ENCODE measurements at regions of chr9 and their contacts with region 1.

Region 1: GRCh38 chr9:35732122-35732799 is at the starts of genes CREB3 and TLN1:
- DNase-seq: peak; percentile 98
- H3K4me3 Mint-ChIP-seq: no peak within 1 kb of the TSS
- H3K27ac Mint-ChIP-seq: peak within 1 kb of the TSS; percentile 92
- H3K4me1 Mint-ChIP-seq: peaks cover 22% of the 10 kb centered on the region
- H3K27me3 Mint-ChIP-seq: no peaks in the 10 kb centered on the region
- total RNA-seq, gene CREB3: 32.1 and 32.6 TPM in 2 replicates
- total RNA-seq, gene TLN1: 229 and 230 TPM in 2 replicates

Region 2: DNA sequence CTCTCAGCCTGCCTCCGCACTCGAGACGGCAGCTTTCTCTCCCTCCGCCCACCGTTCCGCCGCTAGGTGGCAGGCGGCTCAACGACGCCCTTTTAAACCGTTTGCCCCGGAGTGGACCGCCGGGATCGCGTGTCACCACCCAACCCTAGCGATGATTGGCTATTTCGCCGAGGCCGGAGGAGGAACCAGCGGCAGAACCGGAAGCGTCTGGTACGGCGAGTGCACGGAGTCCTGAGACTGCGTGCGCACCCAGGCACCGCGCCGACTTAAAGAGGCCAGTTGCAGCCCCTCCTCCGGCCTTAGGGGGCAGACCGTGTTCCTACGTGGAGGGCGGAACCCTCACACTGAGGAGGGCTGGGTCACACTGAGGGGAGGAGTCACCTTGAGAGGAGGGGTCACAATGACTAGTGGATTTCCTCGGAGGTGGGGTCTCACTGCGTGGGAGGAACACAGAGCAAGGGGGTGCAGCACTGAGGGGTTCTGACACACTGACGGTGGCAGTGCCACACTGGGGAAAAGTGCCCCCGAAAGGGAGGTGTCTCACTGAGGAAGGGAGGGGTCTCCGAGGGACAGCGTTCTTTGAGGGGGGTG is 128.2 kb before region 1 on chr9:
- intact Hi-C with region 1: loop called (anchors 1 kb)
- DNase-seq: peak; percentile 99
- H3K4me3 Mint-ChIP-seq: peak overlapping the region; percentile 91
- H3K27ac Mint-ChIP-seq: peak overlapping the region; percentile 99
- H3K4me1 Mint-ChIP-seq: peaks cover 34% of the 10 kb centered on the region
- H3K27me3 Mint-ChIP-seq: peaks cover 2% of the 10 kb centered on the region

Region 3: DNA sequence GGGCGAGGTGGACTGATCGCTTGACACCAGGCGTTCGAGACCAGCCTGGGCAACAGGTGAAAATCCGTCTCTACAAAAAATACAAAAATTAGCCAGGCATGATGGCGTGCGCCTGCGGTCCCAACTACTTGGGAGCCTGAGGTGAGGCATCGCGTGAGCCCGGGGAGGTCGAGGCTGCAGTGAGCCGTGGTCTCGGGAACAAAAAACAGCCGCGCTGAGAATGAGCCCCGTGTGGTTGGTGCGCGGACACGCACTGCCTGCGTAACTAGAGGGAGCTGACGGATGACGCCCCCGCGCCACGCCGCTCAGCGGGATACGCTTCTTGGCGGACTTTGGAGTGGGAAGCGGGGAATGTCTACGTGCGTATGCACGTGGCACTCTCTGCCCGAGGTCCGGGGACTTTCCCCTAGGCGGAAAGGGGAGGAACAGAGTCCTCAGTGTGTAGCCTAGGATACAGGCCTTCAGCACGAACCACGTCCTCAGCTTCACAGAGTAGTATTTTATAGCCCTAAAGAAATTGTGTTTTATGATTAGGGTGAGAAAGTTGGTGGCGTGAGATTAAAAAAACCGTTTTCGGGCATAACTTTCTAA is 74.6 kb before region 1 on chr9 and contains the start of gene RMRP:
- intact Hi-C with region 1: loop called (anchors 1 kb)
- DNase-seq: peak; percentile 88
- H3K4me3 Mint-ChIP-seq: peak within 1 kb of the TSS; percentile 84
- H3K27ac Mint-ChIP-seq: peak within 1 kb of the TSS; percentile 99
- H3K4me1 Mint-ChIP-seq: peaks cover 59% of the 10 kb centered on the region
- H3K27me3 Mint-ChIP-seq: peaks cover 2% of the 10 kb centered on the region
- total RNA-seq, gene RMRP: 5,317 and 5,787 TPM in 2 replicates

Region 4: DNA sequence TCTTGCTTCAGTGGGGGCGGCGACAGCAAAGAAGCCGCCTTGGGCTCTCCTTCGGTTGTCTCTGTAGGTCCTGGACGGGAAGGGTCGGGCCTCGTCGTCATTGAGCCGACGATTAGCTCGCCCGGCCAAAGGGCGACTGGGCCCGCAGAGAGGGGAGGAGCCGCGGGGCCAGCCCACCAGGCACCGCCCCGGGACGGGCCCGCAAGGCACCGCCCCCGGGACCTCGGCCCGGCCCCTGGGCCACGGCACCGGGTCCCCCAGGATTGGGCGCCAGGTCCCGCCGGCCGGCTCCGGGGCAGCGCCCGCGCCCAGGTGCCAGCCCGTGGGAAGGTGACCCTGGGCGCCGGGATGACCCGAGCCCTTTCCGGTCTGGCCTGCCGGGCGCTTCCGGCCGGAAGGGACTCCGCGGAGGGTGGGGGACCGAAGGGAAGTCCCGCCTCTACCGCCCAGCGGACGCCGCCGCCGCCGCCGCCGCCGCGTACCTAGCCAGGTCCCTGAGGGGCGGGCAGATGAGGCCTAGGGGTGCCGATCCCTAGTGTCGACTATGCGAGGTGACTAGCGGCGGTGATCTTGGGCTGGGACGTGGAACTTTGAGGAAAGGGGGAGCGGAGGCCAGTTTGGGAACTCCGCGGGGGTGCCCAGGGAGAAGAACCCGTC is 16.7 kb after region 1 on chr9 and contains the starts of genes GBA2 and RGP1:
- intact Hi-C with region 1: loop called (anchors 1 kb)
- DNase-seq: peak; percentile 69
- H3K4me3 Mint-ChIP-seq: peak within 1 kb of the TSS; percentile 95
- H3K27ac Mint-ChIP-seq: peak within 1 kb of the TSS; percentile 73
- H3K4me1 Mint-ChIP-seq: peaks cover 40% of the 10 kb centered on the region
- H3K27me3 Mint-ChIP-seq: no peaks in the 10 kb centered on the region
- total RNA-seq, gene GBA2: 54.7 and 58.4 TPM in 2 replicates
- total RNA-seq, gene RGP1: 18.4 and 18.9 TPM in 2 replicates

Region 5: GRCh38 chr9:35829084-35829763 is 97.0 kb after region 1 on chr9 and contains the start of gene TMEM8B:
- intact Hi-C with region 1: loop called (anchors 1 kb)
- DNase-seq: peak; percentile 86
- H3K4me3 Mint-ChIP-seq: peak within 1 kb of the TSS; percentile 91
- H3K27ac Mint-ChIP-seq: peak within 1 kb of the TSS; percentile 89
- H3K4me1 Mint-ChIP-seq: peaks cover 22% of the 10 kb centered on the region
- H3K27me3 Mint-ChIP-seq: peaks cover 3% of the 10 kb centered on the region
- total RNA-seq, gene TMEM8B: 1.7 and 1.9 TPM in 2 replicates

Measured in activated T-helper 1 cell treated with anti-CD3 and anti-CD28 coated beads, Interleukin-12 subunit alpha, Interleukin-12 subunit beta, Interleukin-2, Interleukin-4 antibody, amounts not matched to agents 30 ng/mL and 10 ng/mL and 1 ng/mL, durations not matched to agents 14 hours and 24 hours and 36 hours (primary cell).